Dorsolateral prefrontal cortex (tissue), 120 donors: ENCODE measurements at regions of chr20 and their contacts with region 1.

Region 1: DNA sequence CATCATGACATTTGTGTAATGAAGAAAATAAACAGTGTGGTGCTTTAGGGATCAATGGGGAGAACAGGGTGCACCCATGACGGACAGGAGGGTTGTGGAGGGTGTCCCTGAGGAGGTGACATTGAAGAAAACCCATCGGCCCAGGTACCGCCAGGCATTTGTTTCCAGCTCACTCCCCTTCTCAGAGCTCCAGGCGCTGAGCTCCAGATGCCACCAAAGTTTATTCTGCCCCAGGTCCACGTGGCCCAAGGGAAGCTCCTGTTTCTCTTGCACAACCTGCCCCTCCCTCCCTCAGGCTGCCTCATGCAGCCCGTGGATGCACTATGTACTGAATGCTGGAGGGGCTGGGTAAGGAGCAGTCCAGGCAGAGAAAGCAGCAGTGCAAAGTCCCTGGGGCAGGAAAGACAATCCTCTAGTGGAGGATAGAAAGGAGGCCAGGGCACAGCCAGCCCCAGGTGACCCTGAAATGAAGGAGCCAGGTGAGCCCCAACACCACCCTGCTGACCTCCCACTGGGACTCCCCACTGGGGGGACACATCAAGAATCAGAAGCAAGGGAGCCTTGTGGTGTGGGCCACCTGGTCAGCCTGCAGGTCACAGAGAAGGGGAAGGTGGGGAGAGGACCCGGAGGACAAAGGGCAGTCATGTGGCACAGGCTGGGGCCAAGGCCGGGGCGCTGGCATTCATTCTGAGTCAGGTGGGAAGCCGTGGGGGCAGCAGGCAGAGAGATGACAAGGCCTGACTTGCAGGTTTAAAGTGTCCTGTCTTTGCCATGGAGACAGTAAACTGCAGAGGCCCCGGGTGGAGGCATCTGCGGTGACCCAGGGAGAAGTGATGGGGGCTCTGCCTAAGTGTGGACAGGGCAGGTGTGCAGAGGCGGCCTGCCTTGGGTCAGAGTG is 230.1 kb downstream of the PREX1 start:
- DNase-seq: peak in 4 of 10 donors; percentile 16 to 29 (median 24)
- H3K4me3 ChIP-seq: no peak overlapping the region
- H3K27ac ChIP-seq: no peak overlapping the region
- H3K27me3 ChIP-seq: no peaks in the 10 kb centered on the region
- CTCF ChIP-seq: no peak

Region 2: DNA sequence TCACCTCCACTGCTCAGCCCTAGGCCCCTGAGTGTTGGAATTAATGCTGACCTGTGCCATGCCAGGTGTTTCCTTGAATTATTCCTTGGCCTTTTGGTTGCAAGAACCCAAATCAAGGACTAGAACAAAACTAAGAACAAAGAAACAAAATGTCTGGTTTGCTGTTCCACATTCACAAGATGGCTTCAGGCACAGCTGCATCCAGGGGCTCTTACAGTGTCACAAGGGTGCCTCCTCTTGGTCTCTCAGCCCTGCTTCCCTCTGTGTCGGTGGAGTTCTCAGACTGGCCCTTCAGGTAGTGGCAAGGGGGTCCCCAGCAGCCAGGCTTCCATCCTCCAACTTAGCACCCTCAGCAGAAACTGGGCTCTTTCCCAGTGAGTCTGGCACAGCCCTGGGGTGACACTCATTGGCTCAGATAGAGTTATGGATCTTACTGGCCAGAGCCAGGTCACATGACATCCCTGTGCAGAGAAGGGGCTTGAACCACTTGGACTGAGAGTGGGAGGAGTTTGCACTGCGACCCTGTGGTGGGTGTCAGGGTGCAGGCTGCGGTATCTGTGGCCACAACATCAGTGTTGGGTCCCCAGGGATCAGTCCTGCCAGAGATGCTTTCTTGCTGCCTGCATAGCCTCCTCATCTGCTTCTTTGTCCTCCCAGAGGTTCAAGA is 384.7 kb before region 1 on chr20:
- intact Hi-C with region 1: loop called in 1 of 2 experiments (anchors 2 kb)
- DNase-seq: no peak
- H3K4me3 ChIP-seq: no peak overlapping the region
- H3K27ac ChIP-seq: no peak overlapping the region
- H3K27me3 ChIP-seq: no peaks in the 10 kb centered on the region
- CTCF ChIP-seq: no peak

Region 3: GRCh38 chr20:48463403-48464319 is 134.0 kb before region 1 on chr20:
- intact Hi-C with region 1: no loop called
- DNase-seq: peak in 1 of 10 donors; percentile 21
- H3K4me3 ChIP-seq: no peak overlapping the region
- H3K27ac ChIP-seq: peak overlapping the region in 1 of 59 donors; percentile 38
- H3K27me3 ChIP-seq: peaks cover 0 to 19% (median 0%) of the 10 kb centered on the region in 45 donors
- CTCF ChIP-seq: no peak

Region 4: DNA sequence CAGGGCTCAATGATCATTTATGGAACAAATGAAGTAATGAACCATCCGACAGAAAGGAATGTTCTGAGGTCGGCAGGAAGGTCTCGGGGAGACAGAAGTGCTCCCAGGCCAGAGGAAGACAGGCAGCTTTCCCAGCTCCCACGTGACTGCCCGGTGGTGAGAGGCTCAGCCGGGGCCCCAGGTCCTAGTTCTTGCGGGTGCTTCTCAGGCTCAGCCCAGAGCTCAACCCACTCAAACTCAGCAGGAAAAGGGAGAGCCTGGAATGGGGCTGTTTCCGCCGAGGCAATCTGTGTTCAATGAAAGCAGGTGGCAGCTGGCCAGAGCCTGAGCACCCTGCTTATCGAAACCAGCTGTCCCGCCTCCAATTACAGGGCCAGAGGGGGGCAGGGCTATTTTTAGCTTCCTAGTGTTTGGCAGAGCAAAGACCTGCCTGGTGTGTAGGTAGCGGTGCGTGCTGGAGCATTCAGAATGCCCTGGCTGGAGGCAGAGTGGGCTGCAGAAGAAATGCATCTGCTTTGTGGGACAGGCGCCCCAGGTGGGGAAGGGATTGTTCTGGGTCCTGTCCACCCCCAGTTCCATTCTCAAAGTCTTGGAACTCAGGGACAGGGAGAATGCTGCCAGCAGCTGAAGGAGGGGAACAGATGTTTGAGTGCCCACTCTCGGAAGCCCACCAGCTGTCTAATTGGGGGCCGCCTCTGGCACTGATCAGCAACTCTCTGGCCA is 85.0 kb after region 1 on chr20:
- intact Hi-C with region 1: no loop called
- DNase-seq: peak; percentile 25 to 81 (median 76)
- H3K4me3 ChIP-seq: peak overlapping the region in 10 of 59 donors; percentile 4 to 24 (median 16)
- H3K27ac ChIP-seq: peak overlapping the region in 58 of 59 donors; percentile 21 to 88 (median 76)
- H3K27me3 ChIP-seq: no peaks in the 10 kb centered on the region
- CTCF ChIP-seq: peak in 1 of 56 donors; percentile 10

Region 5: DNA sequence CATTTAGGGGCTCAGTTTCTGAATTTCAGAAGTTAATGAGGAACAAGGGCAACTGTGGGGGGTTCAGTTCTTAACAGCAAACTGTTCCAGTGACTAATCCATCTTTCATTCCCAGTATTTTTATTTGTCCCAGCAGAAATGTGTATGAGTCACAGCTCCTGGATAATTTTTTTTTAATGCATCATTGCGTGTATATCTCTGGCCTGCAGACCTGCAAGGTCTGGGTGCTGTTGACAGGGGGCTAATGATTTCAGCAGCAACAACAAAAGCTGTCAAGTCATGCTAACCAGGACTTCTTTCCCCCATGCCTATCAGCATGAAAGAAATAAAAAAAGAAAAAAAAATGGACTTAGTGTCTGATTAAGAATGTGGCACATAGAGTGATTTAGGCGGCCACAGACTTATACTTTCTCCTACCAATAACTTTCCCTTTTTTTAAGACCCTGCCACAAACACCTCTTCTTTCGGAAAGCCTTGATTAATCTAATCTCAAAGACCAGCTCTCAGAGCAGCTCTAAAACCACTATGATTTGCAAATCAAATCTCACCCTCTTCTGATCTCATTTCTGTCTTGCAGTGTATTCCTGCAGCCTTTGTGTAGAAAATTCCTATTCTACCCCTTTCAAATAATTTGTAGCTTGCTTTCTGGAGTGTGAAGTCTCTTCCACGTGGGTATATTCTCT is 244.3 kb after region 1 on chr20:
- intact Hi-C with region 1: no loop called
- DNase-seq: no peak
- H3K4me3 ChIP-seq: no peak overlapping the region
- H3K27ac ChIP-seq: peak overlapping the region in 10 of 59 donors; percentile 2 to 53 (median 22)
- H3K27me3 ChIP-seq: no peaks in the 10 kb centered on the region
- CTCF ChIP-seq: no peak